ENCODE measurements at regions of chr3 and their contacts with region 1.

Region 1: DNA sequence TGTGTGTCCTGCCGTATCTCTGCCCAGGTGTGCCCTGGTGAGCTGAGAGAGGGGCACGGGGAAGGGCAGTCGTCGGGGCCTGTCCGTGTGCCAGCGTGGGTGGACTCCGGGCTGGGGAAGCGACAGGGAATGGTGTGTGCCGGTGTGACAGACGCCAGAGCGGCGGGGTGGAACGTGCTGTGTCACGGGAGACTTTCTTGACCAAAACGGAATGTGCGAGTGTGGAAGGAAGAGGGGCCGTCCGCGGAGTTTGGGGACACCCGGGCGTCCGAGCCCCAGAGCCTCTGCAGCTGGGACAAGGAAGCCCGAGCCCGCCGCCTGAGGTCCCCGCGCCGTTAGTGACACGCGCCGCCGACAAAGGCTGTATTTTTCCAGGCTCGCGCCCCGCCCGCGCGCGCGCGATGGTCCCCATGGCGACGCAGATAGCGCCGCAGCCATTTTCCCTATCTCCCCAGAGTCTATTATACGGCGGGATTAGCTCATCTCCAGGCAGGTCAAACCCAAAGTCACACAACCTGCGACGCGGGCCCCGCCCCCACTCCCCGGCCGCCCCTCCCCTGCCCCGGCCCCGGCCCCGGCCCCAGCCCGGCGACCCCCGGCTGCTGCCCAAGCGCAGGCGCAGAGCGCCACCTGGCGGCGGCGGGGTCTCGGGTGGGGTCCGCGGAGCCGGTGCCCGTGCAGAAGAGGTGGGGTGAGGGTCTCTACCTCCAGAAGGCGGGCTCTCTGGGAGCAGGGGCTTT is 4.6 kb upstream of the GATA2 start:
- DNase-seq: no peak
- H3K4me3 ChIP-seq: peak overlapping the region; percentile 20 to 60 (median 50)
- H3K27ac ChIP-seq: no peak overlapping the region
- H3K4me1 ChIP-seq: peaks cover 6% of the 10 kb centered on the region
- H3K27me3 ChIP-seq: peaks cover 21% of the 10 kb centered on the region
- CTCF ChIP-seq: peak; percentile 40 to 63

Region 2: DNA sequence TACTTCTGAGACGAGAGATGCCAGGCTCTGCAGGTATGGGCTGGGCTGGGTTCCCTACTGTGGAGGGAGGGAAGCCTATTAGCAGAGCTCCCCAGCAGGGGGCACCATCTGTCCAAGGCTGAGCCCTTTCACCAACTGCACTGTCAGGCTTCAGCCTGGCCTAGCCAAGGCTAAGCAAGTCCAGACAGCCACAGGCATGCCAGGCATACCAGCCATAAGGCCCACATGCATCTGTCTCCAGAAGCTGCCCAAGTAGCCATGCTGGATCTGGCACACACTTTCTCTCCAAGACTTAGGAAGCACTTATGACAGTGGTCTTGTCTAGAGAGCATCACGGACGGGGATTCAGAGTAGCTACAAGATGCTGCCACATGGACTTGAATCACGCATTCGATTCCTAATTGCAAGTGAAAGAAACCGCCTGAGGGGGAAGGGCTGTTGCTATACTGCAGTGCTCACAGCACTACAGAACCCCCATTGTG is 402.3 kb before region 1 on chr3:
- CTCF ChIA-PET with region 1: no interaction called
- dilution Hi-C with region 1: no loop called
- in situ Hi-C with region 1: no loop called
- intact Hi-C with region 1: loop called (anchors 1 kb)
- DNase-seq: peak; percentile 86
- H3K4me3 ChIP-seq: no peak overlapping the region
- H3K27ac ChIP-seq: no peak overlapping the region
- H3K4me1 ChIP-seq: peaks cover 21% of the 10 kb centered on the region
- H3K27me3 ChIP-seq: no peaks in the 10 kb centered on the region
- CTCF ChIP-seq: peak; percentile 90 to 98

Region 3: DNA sequence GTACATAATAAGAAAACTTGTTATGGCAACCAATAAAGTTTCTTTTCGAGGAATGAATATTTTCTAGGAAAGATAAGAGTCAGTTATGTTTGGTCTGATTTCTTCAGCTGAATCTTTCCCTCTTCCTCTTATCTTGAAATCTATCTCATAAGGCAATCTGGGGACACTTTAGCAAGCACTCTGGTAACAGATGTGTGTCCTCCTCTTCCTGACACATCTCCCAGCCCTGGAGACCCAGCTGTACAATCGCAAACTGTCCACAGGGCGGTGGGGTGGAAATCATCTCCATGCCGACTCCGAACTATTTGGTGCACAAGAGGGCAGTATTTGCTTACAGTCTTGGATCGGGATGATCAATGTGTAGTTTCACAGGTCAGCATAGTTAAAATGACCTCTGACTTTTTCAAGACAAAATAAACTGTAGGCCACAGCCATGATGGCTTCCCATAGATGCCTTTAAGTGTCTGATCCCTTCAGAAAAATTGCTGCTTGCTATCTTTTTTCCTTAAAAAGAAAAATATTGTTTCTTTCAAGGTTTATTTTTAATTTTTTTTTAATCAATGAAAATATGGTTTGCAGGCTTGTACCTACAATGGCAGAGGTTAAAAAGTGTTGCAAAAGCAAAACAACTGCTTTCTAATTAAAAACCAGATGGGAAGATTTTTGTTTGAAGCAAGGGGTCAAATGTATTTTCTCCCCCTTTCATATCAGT is 326.6 kb before region 1 on chr3:
- CTCF ChIA-PET with region 1: no interaction called
- dilution Hi-C with region 1: no loop called
- in situ Hi-C with region 1: no loop called
- intact Hi-C with region 1: loop called (anchors 1 kb)
- DNase-seq: peak; percentile 61
- H3K4me3 ChIP-seq: no peak overlapping the region
- H3K27ac ChIP-seq: no peak overlapping the region
- H3K4me1 ChIP-seq: no peaks in the 10 kb centered on the region
- H3K27me3 ChIP-seq: no peaks in the 10 kb centered on the region
- CTCF ChIP-seq: peak; percentile 67 to 72

Region 4: GRCh38 chr3:128226795-128227395 is 270.7 kb before region 1 on chr3:
- CTCF ChIA-PET with region 1: no interaction called
- dilution Hi-C with region 1: no loop called
- in situ Hi-C with region 1: no loop called
- intact Hi-C with region 1: loop called (anchors 5 kb)
- DNase-seq: peak; percentile 9
- H3K4me3 ChIP-seq: no peak overlapping the region
- H3K27ac ChIP-seq: no peak overlapping the region
- H3K4me1 ChIP-seq: no peaks in the 10 kb centered on the region
- H3K27me3 ChIP-seq: no peaks in the 10 kb centered on the region
- CTCF ChIP-seq: peak; percentile 63 to 84